ENCODE measurements at regions of chr2 and their contacts with region 1.

Region 1: GRCh38 chr2:140863713-140864112 is 1267.1 kb downstream of the LRP1B start:
- DNase-seq: peak; percentile 63
- ATAC-seq: peak; percentile 64
- H3K4me3 ChIP-seq: no peak overlapping the region
- H3K27ac ChIP-seq: no peak overlapping the region
- H3K4me1 ChIP-seq: no peaks in the 10 kb centered on the region
- H3K27me3 ChIP-seq: no peaks in the 10 kb centered on the region
- CTCF ChIP-seq: peak; percentile 24 to 66 (median 40); a peak in 4 of 6 replicates
- POLR2A ChIP-seq: no peak
- RAD21 ChIP-seq: peak; percentile 73

Region 2: DNA sequence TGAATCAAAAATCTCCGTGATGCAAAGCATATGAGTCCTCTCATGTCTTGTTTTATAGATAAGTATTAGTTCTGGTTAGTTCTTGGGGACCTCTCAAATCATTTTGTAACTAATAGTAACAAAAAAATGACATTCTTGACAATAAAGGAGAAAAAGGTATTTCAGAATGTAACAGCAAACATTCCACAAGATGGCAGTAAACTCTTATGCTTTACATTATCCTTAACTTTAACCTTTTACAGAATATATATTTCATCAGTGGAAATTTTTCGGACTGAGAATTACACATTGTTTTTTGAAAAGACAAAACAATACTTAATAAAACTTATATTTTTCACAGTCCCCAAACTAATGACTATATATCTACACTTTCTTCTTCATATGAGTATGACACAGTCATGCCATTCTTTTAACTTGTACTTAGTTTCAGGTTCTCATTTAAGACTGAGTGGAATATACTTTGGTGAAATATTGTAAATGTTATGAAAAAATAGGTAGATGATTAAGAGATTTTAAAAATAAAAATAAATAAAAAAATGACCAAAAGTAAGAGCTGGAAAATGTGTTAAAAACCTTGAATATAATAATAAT is 1940.6 kb before region 1 on chr2:
- CTCF ChIA-PET with region 1: no interaction called
- POLR2A ChIA-PET with region 1: no interaction called
- RAD21 ChIA-PET with region 1: no interaction called
- intact Hi-C with region 1: loop called (anchors 10 kb)
- DNase-seq: peak; percentile 22
- ATAC-seq: 0 out of 2 replicates have a peak, but pooled peaks have one; percentile 36
- H3K4me3 ChIP-seq: no peak overlapping the region
- H3K27ac ChIP-seq: no peak overlapping the region
- H3K4me1 ChIP-seq: no peaks in the 10 kb centered on the region
- H3K27me3 ChIP-seq: no peaks in the 10 kb centered on the region
- CTCF ChIP-seq: peak; percentile 34 to 71 (median 70); a peak in 5 of 6 replicates
- POLR2A ChIP-seq: no peak
- RAD21 ChIP-seq: peak; percentile 85

Region 3: GRCh38 chr2:139790807-139791752 is 1072.6 kb before region 1 on chr2:
- CTCF ChIA-PET with region 1: no interaction called
- POLR2A ChIA-PET with region 1: no interaction called
- RAD21 ChIA-PET with region 1: no interaction called
- intact Hi-C with region 1: loop called (anchors 5 kb)
- DNase-seq: peak; percentile 29
- ATAC-seq: peak; percentile 66
- H3K4me3 ChIP-seq: no peak overlapping the region
- H3K27ac ChIP-seq: no peak overlapping the region
- H3K4me1 ChIP-seq: no peaks in the 10 kb centered on the region
- H3K27me3 ChIP-seq: no peaks in the 10 kb centered on the region
- CTCF ChIP-seq: peak; percentile 25 to 56 (median 44); a peak in 4 of 6 replicates
- POLR2A ChIP-seq: no peak
- RAD21 ChIP-seq: peak; percentile 74

Region 4: DNA sequence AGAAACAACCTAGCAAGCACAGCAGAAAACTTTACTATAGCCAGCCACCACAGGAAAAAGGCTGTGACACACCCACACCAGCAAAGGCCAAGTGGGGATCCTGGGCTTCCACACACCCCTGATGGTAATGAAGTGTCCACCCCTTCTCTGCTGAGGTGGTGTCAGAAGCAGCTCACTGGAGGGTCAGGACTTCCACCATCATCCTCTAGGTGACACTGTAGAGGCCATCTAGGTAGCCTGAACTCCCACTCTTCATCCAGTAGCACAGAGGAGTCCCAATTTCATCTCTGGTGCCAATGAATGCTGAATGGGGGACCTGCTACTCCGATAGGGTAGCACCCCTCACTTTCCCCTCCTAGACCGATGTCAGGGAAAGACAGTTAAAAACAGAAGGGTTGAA is 277.3 kb before region 1 on chr2:
- CTCF ChIA-PET with region 1: interaction called, 12 read pairs
- POLR2A ChIA-PET with region 1: no interaction called
- RAD21 ChIA-PET with region 1: no interaction called
- intact Hi-C with region 1: no loop called
- DNase-seq: peak; percentile 45
- ATAC-seq: peak; percentile 100
- H3K4me3 ChIP-seq: no peak overlapping the region
- H3K27ac ChIP-seq: no peak overlapping the region
- H3K4me1 ChIP-seq: no peaks in the 10 kb centered on the region
- H3K27me3 ChIP-seq: no peaks in the 10 kb centered on the region
- CTCF ChIP-seq: peak; percentile 31 to 81 (median 71); a peak in 5 of 6 replicates
- POLR2A ChIP-seq: no peak
- RAD21 ChIP-seq: peak; percentile 41

Region 5: GRCh38 chr2:140759426-140760156 is 104.1 kb before region 1 on chr2:
- CTCF ChIA-PET with region 1: no interaction called
- POLR2A ChIA-PET with region 1: no interaction called
- RAD21 ChIA-PET with region 1: no interaction called
- intact Hi-C with region 1: no loop called
- DNase-seq: no peak
- ATAC-seq: no peak
- H3K4me3 ChIP-seq: no peak overlapping the region
- H3K27ac ChIP-seq: no peak overlapping the region
- H3K4me1 ChIP-seq: no peaks in the 10 kb centered on the region
- H3K27me3 ChIP-seq: no peaks in the 10 kb centered on the region
- CTCF ChIP-seq: no peak
- POLR2A ChIP-seq: no peak
- RAD21 ChIP-seq: no peak

Region 6: DNA sequence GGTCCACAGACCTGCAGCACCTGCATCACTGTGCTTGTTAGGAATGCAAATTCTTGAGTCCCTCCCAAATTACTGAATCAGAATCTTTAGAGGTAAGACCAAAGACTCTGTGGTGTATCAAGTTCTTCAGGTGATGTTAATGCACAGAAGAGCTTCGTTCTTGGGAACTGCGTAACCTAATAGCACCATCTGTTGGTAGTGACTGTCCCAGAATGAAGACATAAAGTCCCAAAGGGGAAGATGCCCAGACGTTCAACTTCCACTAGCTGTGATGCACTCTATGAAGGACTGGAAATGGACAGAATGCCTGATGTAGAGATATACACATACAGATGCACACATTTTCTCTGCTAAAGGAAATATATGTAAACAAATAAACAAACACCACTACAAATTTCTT is 691.1 kb after region 1 on chr2:
- CTCF ChIA-PET with region 1: interaction called, 13 read pairs
- POLR2A ChIA-PET with region 1: no interaction called
- RAD21 ChIA-PET with region 1: no interaction called
- intact Hi-C with region 1: loop called (anchors 10 kb)
- DNase-seq: peak; percentile 34
- ATAC-seq: peak; percentile 96
- H3K4me3 ChIP-seq: no peak overlapping the region
- H3K27ac ChIP-seq: no peak overlapping the region
- H3K4me1 ChIP-seq: no peaks in the 10 kb centered on the region
- H3K27me3 ChIP-seq: no peaks in the 10 kb centered on the region
- CTCF ChIP-seq: peak; percentile 35 to 69 (median 65); a peak in 5 of 6 replicates
- POLR2A ChIP-seq: no peak
- RAD21 ChIP-seq: peak; percentile 79

Region 7: GRCh38 chr2:142140434-142140845 is 1276.7 kb after region 1 on chr2:
- CTCF ChIA-PET with region 1: interaction called, 12 read pairs
- POLR2A ChIA-PET with region 1: no interaction called
- RAD21 ChIA-PET with region 1: interaction called in 1 of 2 experiments, 5 read pairs
- intact Hi-C with region 1: no loop called
- DNase-seq: peak; percentile 19
- ATAC-seq: peak; percentile 58; the same call in 1 of the 2 replicates
- H3K4me3 ChIP-seq: no peak overlapping the region
- H3K27ac ChIP-seq: no peak overlapping the region
- H3K4me1 ChIP-seq: no peaks in the 10 kb centered on the region
- H3K27me3 ChIP-seq: no peaks in the 10 kb centered on the region
- CTCF ChIP-seq: peak; percentile 37 to 62 (median 44); a peak in 4 of 6 replicates
- POLR2A ChIP-seq: no peak
- RAD21 ChIP-seq: peak; percentile 77

Region 8: DNA sequence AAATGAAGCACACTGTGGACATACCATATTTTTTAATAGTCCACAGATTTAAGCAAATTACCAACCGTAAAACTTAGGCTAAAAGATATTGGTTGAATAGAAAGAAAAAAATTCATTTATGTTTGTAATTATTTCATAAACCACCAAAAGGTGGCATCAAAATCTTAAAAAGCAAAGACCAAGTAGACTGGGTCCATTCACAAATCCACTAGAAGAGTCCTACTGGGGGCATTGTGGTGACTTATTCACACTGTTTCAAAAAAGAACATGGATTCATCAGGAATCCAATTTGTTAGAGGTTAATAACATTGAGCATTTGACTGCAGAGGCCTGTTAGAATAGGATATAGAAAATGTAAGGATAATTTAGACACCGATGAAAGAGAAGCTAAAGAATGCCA is 1818.8 kb after region 1 on chr2:
- CTCF ChIA-PET with region 1: no interaction called
- POLR2A ChIA-PET with region 1: no interaction called
- RAD21 ChIA-PET with region 1: no interaction called
- intact Hi-C with region 1: no loop called
- DNase-seq: peak; percentile 13
- ATAC-seq: no peak
- H3K4me3 ChIP-seq: no peak overlapping the region
- H3K27ac ChIP-seq: no peak overlapping the region
- H3K4me1 ChIP-seq: no peaks in the 10 kb centered on the region
- H3K27me3 ChIP-seq: no peaks in the 10 kb centered on the region
- CTCF ChIP-seq: peak in 1 of 3 experiments; percentile 36; a peak in 1 of 6 replicates
- POLR2A ChIP-seq: no peak
- RAD21 ChIP-seq: peak; percentile 53

Measured in HCT116 (cell line).